ENCODE measurements at regions of chrX and their contacts with region 1.

Region 1: GRCh38 chrX:24241822-24242648 is 71.8 kb downstream of the SUPT20HL2 start:
- DNase-seq: no peak
- ATAC-seq: peak; percentile 60
- H3K4me3 ChIP-seq: no peak overlapping the region
- H3K27ac ChIP-seq: peak overlapping the region; percentile 43
- H3K4me1 ChIP-seq: 0 out of 2 replicates have a peak, but pooled peaks cover 3% of the 10 kb centered on the region
- H3K27me3 ChIP-seq: no peaks in the 10 kb centered on the region
- CTCF ChIP-seq: peak; percentile 35 to 63 (median 42); a peak in 4 of 6 replicates
- EP300 ChIP-seq: no peak
- POLR2A ChIP-seq: no peak
- RAD21 ChIP-seq: peak; percentile 67

Region 2: GRCh38 chrX:23907498-23908218 is 334.4 kb before region 1 on chrX and contains the starts of genes APOO and CXorf58:
- CTCF ChIA-PET with region 1: interaction called, 9 read pairs
- POLR2A ChIA-PET with region 1: no interaction called
- RAD21 ChIA-PET with region 1: interaction called, 4 read pairs
- SMC1A ChIA-PET with region 1: interaction called, 16 read pairs
- in situ Hi-C with region 1: no loop called
- intact Hi-C with region 1: loop called (anchors 2 kb)
- DNase-seq: peak; percentile 54
- ATAC-seq: peak; percentile 95
- H3K4me3 ChIP-seq: peak within 1 kb of the TSS; percentile 78
- H3K27ac ChIP-seq: peak within 1 kb of the TSS; percentile 73
- H3K4me1 ChIP-seq: no peaks in the 10 kb centered on the region; the same call in 1 of the 2 replicates
- H3K27me3 ChIP-seq: no peaks in the 10 kb centered on the region
- CTCF ChIP-seq: peak; percentile 73 to 83 (median 76)
- EP300 ChIP-seq: no peak; a peak in 1 of 4 replicates
- POLR2A ChIP-seq: peak; percentile 81
- RAD21 ChIP-seq: peak; percentile 51
- polyA plus RNA-seq, gene APOO: 41.8 to 42.9 TPM
- polyA plus RNA-seq, gene CXorf58: not detected

Region 3: GRCh38 chrX:24081661-24082264 is 160.3 kb before region 1 on chrX:
- CTCF ChIA-PET with region 1: interaction called, 9 read pairs
- POLR2A ChIA-PET with region 1: interaction called, 3 read pairs
- RAD21 ChIA-PET with region 1: interaction called, 10 read pairs
- SMC1A ChIA-PET with region 1: interaction called, 14 read pairs
- in situ Hi-C with region 1: loop called (anchors 5 kb)
- intact Hi-C with region 1: loop called (anchors 1 kb)
- DNase-seq: no peak
- ATAC-seq: peak; percentile 76
- H3K4me3 ChIP-seq: no peak overlapping the region
- H3K27ac ChIP-seq: no peak overlapping the region
- H3K4me1 ChIP-seq: peaks cover 9% of the 10 kb centered on the region
- H3K27me3 ChIP-seq: no peaks in the 10 kb centered on the region
- CTCF ChIP-seq: peak; percentile 35 to 57 (median 45)
- EP300 ChIP-seq: no peak
- POLR2A ChIP-seq: no peak
- RAD21 ChIP-seq: peak; percentile 51

Region 4: DNA sequence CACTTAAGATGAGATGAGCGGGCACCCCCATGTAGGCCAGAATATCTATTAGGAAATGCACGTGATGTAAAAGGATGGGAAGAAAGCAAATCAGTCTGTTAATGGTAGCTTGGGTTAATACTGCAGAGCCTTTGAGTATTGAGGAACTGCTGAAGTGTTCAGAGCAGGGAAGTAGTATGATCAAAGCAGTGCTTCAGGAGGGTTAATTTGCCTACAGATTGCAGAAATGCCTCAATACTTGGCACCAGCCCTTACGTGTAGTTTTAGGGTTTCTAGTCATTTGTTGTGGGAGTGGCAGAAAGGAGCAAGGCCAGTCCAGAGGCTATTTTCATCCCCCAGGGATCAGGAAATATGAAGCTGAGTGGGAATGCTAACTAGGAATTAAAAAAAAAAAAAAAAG is 72.8 kb before region 1 on chrX:
- CTCF ChIA-PET with region 1: interaction called, 3 read pairs
- POLR2A ChIA-PET with region 1: interaction called, 3 read pairs
- RAD21 ChIA-PET with region 1: interaction called, 4 read pairs
- SMC1A ChIA-PET with region 1: interaction called, 6 read pairs
- in situ Hi-C with region 1: no loop called
- intact Hi-C with region 1: loop called (anchors 5 kb)
- DNase-seq: peak; percentile 49
- ATAC-seq: peak; percentile 88
- H3K4me3 ChIP-seq: 0 out of 2 replicates have a peak overlapping the region, but pooled peaks have one; percentile 20
- H3K27ac ChIP-seq: peak overlapping the region; percentile 54
- H3K4me1 ChIP-seq: peaks cover 34% of the 10 kb centered on the region
- H3K27me3 ChIP-seq: no peaks in the 10 kb centered on the region
- CTCF ChIP-seq: no peak
- EP300 ChIP-seq: no peak
- POLR2A ChIP-seq: no peak
- RAD21 ChIP-seq: no peak

Measured in GM12878 (cell line).